Ascending aorta (tissue), 2 donors: ENCODE measurements at regions of chr7 and their contacts with region 1.

Region 1: DNA sequence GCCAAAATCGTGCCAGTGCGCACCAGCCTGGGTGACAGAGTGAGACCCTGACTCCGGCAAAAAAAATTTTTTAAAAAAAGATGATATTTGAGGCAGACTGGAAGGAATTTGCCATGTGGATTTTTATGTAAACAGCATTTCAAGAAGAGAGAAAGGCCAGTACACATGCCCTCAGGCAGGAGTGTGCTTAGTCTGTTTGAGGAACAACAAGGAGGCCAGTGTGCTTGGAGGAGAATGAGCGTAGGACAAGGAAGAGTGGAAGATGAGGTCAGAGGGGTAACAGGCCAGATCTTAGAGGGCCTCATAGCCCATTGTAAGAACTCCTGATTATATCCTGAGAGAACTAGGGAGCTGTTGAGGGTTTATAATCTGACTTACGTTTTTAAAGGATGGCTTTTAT is 17.2 kb upstream of the STRIP2 start:
- DNase-seq: no peak
- H3K4me3 ChIP-seq: no peak overlapping the region
- H3K27ac ChIP-seq: no peak overlapping the region
- H3K4me1 ChIP-seq: no peaks in the 10 kb centered on the region
- H3K27me3 ChIP-seq: no peaks in the 10 kb centered on the region
- CTCF ChIP-seq: no peak

Region 2: DNA sequence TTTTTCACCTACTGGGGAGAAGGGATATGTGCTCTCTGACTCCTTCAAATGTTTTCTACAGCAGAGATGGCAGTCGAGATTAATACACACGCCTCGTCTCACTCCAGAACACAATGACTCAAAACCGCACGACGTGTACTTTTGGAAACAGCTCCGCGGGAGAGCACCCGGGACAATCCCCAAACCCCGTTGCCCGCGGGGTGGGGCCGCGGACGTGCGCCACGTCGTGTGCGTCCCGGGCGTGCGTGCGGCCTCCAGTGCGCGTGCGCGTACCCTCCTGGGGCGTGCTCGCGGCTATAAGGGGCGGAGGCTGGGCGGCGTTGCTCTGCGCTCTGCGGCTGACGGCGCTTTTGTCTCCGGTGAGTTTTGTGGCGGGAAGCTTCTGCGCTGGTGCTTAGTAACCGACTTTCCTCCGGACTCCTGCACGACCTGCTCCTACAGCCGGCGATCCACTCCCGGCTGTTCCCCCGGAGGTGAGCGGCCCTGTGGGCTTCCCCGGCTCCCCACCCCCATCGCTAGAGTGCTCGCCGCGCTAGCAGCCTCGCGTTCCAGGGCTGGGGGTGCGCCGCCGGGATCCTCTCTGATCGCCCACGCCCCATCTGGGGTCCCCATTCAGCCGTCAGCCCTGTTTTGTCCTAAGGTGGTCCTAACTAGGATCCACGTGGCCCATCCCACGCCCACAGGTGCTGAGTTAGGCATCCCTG is 961.4 kb before region 1 on chr7 and contains the start of gene HILPDA:
- intact Hi-C with region 1: no loop called
- DNase-seq: peak; percentile 79 to 97
- H3K4me3 ChIP-seq: peak within 1 kb of the TSS; percentile 72 to 84
- H3K27ac ChIP-seq: peak within 1 kb of the TSS; percentile 90 to 96
- H3K4me1 ChIP-seq: peaks cover 4 to 18% of the 10 kb centered on the region in 2 donors
- H3K27me3 ChIP-seq: no peaks in the 10 kb centered on the region
- CTCF ChIP-seq: no peak
- total RNA-seq, gene HILPDA: 19.3 TPM

Region 3: GRCh38 chr7:129454249-129454551 is 37.1 kb after region 1 on chr7:
- intact Hi-C with region 1: loop called (anchors 5 kb)
- DNase-seq: no peak
- H3K4me3 ChIP-seq: no peak overlapping the region
- H3K27ac ChIP-seq: no peak overlapping the region
- H3K4me1 ChIP-seq: no peaks in the 10 kb centered on the region
- H3K27me3 ChIP-seq: no peaks in the 10 kb centered on the region
- CTCF ChIP-seq: no peak